Heart left ventricle (tissue), 16 donors: ENCODE measurements at regions of chr6 and their contacts with region 1.

Region 1: DNA sequence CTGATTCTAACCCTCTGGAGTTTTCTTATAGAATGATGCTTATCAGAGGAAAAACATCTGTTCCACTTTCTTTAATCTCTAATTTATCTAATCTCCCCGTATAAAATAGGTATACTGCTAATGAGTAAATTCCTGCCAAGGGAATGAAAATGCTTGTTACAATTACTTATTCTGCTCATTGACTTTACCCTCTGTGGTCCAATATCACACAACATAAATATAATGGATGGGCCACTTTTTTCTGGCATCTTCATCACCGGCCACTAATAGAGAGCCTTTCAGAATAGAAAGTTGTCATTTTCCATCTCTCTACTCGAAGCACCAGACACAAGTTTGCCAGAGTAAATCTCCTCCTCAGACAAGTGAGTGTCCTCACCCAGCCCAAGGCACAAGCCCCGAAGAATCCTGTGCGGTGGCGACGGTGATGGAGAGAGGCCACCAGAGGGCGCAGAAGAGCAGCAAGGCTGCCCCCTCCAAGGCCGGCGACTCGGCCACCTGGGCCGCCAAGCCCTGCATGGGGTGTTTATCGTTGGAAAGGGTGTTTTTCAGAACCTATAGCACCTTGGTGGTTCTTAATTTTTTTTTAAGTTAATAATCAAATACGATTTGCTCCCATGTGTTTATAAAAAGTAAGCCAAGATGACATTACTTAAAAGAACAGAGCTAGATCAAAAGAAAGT is 212.9 kb upstream of the ARID1B start:
- DNase-seq: peak; percentile 71 to 89 (median 79)
- ATAC-seq: peak; percentile 91 to 96 (median 94)
- H3K4me3 ChIP-seq: no peak overlapping the region
- H3K27ac ChIP-seq: no peak overlapping the region
- H3K4me1 ChIP-seq: peaks cover 0 to 12% (median 3%) of the 10 kb centered on the region in 12 donors
- H3K27me3 ChIP-seq: peaks cover 0 to 3% (median 0%) of the 10 kb centered on the region in 9 donors
- CTCF ChIP-seq: peak; percentile 92 to 99 (median 96)
- POLR2A ChIP-seq: no peak

Region 2: DNA sequence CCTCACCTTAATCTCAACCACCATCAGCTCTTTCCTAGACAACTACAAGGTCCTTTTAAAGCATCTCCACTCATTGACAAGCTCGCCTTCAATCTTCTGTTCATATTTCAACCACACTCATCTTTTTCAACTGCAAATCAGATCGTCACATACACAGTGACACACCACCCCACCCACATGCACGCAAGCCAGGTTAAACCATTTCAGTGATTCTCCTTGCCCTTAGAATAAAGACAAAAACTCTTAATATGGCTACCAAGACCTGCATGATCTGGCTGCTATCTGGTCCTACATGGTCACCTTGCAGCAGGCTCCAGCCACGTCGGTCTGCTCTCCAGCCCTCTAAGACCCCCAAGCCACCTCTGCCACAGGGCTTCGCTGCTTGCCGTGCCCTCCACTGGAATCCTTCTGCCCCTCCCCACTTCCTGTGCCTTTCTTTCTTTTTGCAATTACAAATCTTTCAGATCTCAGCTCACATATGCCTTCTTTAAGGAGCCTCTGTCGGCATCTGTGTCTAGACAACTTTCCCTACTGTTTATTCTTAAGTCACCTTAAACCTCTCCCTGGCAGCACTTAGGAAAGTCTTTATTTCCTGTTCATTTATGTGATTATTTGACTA is 294.4 kb before region 1 on chr6:
- intact Hi-C with region 1: no loop called
- DNase-seq: no peak
- ATAC-seq: no peak
- H3K4me3 ChIP-seq: no peak overlapping the region
- H3K27ac ChIP-seq: no peak overlapping the region
- H3K4me1 ChIP-seq: no peaks in the 10 kb centered on the region
- H3K27me3 ChIP-seq: no peaks in the 10 kb centered on the region
- CTCF ChIP-seq: no peak
- POLR2A ChIP-seq: no peak

Region 3: GRCh38 chr6:156599978-156600590 is 35.8 kb after region 1 on chr6:
- intact Hi-C with region 1: no loop called
- DNase-seq: no peak
- ATAC-seq: peak; percentile 55 to 88 (median 70)
- H3K4me3 ChIP-seq: no peak overlapping the region
- H3K27ac ChIP-seq: peak overlapping the region in 10 of 12 donors; percentile 4 to 69 (median 22)
- H3K4me1 ChIP-seq: peaks cover 0 to 10% (median 0%) of the 10 kb centered on the region in 12 donors
- H3K27me3 ChIP-seq: no peaks in the 10 kb centered on the region
- CTCF ChIP-seq: no peak
- POLR2A ChIP-seq: no peak

Region 4: DNA sequence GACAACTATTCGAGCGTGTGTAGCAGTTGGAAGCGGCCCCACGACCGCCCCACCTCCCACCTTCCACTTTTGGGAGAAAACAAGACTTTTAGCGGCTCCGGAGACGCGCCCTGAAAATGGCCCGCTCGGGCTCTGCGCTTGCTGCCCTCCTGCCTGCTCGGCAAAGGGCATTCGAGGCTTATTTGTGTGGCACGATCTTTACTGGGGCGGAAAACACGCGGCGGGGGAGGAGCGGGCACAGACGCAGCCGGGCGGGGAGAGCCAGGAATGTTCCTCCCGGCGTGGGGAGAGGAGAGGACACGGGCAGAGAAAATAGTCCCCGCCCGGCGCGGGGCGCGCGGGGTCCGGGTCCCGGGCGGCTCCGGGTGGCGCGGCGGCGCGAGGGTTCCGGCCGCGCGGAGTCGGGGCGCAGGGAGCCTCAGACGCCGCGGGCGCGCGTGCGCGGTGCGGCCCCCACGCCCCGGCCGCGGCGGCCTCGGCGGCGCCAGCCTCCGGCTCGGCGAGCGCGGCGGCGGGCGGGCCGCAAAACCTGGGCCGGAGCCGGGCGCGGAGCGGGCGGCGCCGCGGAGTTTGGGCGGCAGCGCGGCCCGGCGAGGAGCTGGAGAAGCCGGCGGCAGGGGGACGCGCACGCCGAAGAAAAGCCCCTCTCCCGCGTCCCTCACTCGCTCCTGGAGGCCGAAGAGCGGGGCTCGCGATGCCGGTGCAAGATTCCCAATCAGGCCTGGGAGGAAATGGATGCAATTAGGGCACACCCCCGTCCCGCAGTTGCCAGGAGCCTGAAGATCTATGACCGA is 122.9 kb after region 1 on chr6:
- intact Hi-C with region 1: loop called (anchors 1 to 10 kb)
- DNase-seq: peak; percentile 92 to 95 (median 94)
- ATAC-seq: peak; percentile 96 to 98 (median 96)
- H3K4me3 ChIP-seq: peak overlapping the region; percentile 36 to 91 (median 76)
- H3K27ac ChIP-seq: peak overlapping the region; percentile 91 to 100 (median 98)
- H3K4me1 ChIP-seq: peaks cover 0 to 18% (median 11%) of the 10 kb centered on the region in 12 donors
- H3K27me3 ChIP-seq: no peaks in the 10 kb centered on the region
- CTCF ChIP-seq: no peak
- POLR2A ChIP-seq: peak in 1 of 2 donors; percentile 80

Region 5: GRCh38 chr6:156953479-156954146 is 389.3 kb after region 1 on chr6:
- intact Hi-C with region 1: loop called in 3 of 10 experiments (anchors 5 to 10 kb)
- DNase-seq: peak in 2 of 5 donors; percentile 47 to 62
- ATAC-seq: peak; percentile 57 to 80 (median 71)
- H3K4me3 ChIP-seq: peak overlapping the region in 7 of 12 donors; percentile 6 to 39 (median 29)
- H3K27ac ChIP-seq: peak overlapping the region in 11 of 12 donors; percentile 27 to 76 (median 53)
- H3K4me1 ChIP-seq: peaks cover 13 to 88% (median 66%) of the 10 kb centered on the region in 12 donors
- H3K27me3 ChIP-seq: no peaks in the 10 kb centered on the region
- CTCF ChIP-seq: peak in 10 of 12 donors; percentile 24 to 66 (median 50)
- POLR2A ChIP-seq: no peak

Region 6: DNA sequence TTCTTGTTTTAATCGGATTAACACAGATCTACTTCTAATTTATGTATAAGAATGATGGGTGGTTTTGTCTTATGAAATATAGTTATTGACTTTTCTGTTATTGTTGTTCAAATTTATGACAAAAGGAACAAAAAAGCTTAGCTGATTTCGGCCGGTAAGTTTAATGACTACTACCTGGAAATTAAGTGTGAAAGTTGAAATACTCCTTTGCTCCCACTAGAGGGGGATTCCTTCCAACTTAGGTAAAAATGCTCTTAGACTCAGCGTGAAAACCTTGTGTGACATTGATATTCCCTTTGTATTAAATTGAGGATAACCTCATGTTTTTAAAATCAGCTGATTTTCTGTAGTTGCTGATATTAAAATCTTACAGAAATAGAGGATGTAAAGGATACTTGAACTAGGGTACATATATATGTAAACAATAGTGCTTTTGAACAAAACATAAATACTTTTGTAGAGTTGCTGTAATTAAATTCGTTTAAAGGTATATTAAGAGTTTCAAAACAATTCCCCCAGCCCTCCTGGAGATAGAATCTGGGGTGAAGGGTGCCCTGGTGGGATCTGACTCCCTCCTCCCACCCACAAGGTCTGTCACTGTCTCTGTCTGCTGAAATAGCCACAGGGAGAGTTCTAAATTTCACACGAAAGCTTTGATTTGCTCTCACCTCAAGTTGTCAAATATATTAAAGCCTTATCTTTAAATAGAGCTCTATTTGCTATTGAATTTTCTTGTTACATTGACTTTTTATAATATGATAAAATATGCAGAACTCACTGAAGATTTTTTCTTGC is 470.4 kb after region 1 on chr6:
- intact Hi-C with region 1: loop called in 3 of 10 experiments (anchors 5 to 10 kb)
- DNase-seq: no peak
- ATAC-seq: peak in 3 of 4 donors; percentile 47 to 68 (median 66)
- H3K4me3 ChIP-seq: no peak overlapping the region
- H3K27ac ChIP-seq: no peak overlapping the region
- H3K4me1 ChIP-seq: peaks cover 0 to 54% (median 39%) of the 10 kb centered on the region in 12 donors
- H3K27me3 ChIP-seq: no peaks in the 10 kb centered on the region
- CTCF ChIP-seq: peak; percentile 45 to 75 (median 58)
- POLR2A ChIP-seq: no peak

Region 7: DNA sequence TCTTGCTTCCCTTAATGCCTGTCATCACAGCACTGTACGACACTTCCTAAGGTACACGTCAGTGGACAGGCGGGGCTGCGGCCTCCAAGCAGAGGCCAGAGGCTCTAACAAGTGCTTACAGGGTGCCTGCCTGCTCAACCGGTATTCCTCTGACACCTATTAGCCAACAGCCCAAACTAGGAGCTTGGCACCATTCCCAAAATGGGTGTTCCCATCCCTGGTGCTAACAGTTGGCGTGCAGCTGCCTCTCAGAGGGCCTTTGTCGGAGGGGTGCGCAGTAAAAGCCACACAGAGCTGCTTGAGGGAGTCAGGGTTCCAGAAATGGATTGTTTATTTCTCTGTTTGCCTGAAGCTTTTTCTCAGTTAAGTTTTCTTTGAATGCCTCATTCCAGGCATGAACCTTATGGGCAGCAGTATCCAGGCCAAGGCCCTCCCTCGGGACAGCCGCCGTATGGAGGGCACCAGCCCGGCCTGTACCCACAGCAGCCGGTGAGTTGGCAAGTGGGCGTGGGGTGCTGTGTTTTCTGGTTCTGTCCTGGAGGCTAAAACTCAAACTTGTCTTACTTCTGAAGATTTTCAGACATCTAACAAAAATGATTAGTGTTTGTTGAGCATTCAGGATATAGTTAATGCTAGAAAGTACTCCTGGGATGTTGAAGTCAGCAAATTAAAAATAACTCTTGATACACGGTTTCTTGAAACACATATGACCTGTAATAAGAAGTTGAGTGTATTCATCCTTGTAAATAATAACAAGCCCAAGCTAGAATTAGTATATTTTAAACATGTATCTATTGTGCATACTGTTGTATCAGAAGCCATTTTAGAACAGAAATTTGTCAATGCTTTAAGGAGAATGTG is 634.4 kb after region 1 on chr6:
- intact Hi-C with region 1: loop called in 1 of 10 experiments (anchors 10 kb)
- DNase-seq: peak in 4 of 5 donors; percentile 72 to 86 (median 77)
- ATAC-seq: peak; percentile 76 to 94 (median 92)
- H3K4me3 ChIP-seq: peak overlapping the region in 4 of 12 donors; percentile 5 to 33 (median 10)
- H3K27ac ChIP-seq: peak overlapping the region in 10 of 12 donors; percentile 3 to 78 (median 54)
- H3K4me1 ChIP-seq: peaks cover 0 to 16% (median 8%) of the 10 kb centered on the region in 12 donors
- H3K27me3 ChIP-seq: no peaks in the 10 kb centered on the region
- CTCF ChIP-seq: no peak
- POLR2A ChIP-seq: no peak